HCT116 (cell line): ENCODE measurements at regions of chr1 and their contacts with region 1.

Region 1: GRCh38 chr1:219837274-219837993 is 90.9 kb downstream of the SLC30A10 start:
- DNase-seq: peak; percentile 60
- ATAC-seq: peak; percentile 88
- H3K4me3 ChIP-seq: no peak overlapping the region
- H3K27ac ChIP-seq: no peak overlapping the region
- H3K4me1 ChIP-seq: no peaks in the 10 kb centered on the region
- H3K27me3 ChIP-seq: peaks cover 7% of the 10 kb centered on the region; the same call in 1 of the 2 replicates
- CTCF ChIP-seq: peak; percentile 60 to 80 (median 63)
- POLR2A ChIP-seq: no peak
- RAD21 ChIP-seq: peak; percentile 89

Region 2: GRCh38 chr1:219862366-219862765 is 24.9 kb after region 1 on chr1:
- CTCF ChIA-PET with region 1: no interaction called
- POLR2A ChIA-PET with region 1: no interaction called
- RAD21 ChIA-PET with region 1: no interaction called
- intact Hi-C with region 1: no loop called
- DNase-seq: no peak
- ATAC-seq: no peak
- H3K4me3 ChIP-seq: no peak overlapping the region
- H3K27ac ChIP-seq: no peak overlapping the region
- H3K4me1 ChIP-seq: no peaks in the 10 kb centered on the region
- H3K27me3 ChIP-seq: no peaks in the 10 kb centered on the region; the same call in 1 of the 2 replicates
- CTCF ChIP-seq: no peak
- POLR2A ChIP-seq: no peak
- RAD21 ChIP-seq: no peak

Region 3: DNA sequence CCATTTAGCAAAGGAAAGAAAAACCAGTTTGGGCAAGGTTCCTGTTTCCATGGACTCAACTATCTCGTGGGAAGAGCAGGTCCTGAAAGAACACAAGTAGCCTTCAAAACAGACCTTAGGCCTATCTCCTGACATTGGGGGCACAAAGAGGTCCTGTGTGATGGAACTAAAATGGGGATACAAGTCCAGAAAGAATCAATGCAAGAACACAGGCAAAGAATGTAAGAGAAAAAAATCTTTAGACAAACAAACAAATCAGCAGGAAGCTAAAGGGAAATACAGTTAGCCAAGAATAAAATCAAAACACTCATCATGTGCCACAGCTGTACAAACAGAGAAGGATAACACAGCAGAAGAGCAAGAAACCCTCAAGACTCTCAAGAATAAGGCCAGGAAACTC is 62.8 kb after region 1 on chr1:
- CTCF ChIA-PET with region 1: no interaction called
- POLR2A ChIA-PET with region 1: no interaction called
- RAD21 ChIA-PET with region 1: no interaction called
- intact Hi-C with region 1: no loop called
- DNase-seq: no peak
- ATAC-seq: no peak
- H3K4me3 ChIP-seq: no peak overlapping the region
- H3K27ac ChIP-seq: no peak overlapping the region
- H3K4me1 ChIP-seq: no peaks in the 10 kb centered on the region
- H3K27me3 ChIP-seq: peaks cover 14% of the 10 kb centered on the region
- CTCF ChIP-seq: no peak
- POLR2A ChIP-seq: no peak
- RAD21 ChIP-seq: no peak

Region 4: GRCh38 chr1:220786337-220787068 is 949.1 kb after region 1 on chr1 and contains the start of gene MTARC1:
- CTCF ChIA-PET with region 1: no interaction called
- POLR2A ChIA-PET with region 1: no interaction called
- RAD21 ChIA-PET with region 1: no interaction called
- intact Hi-C with region 1: loop called (anchors 5 kb)
- DNase-seq: no peak
- ATAC-seq: peak; percentile 85
- H3K4me3 ChIP-seq: peak within 1 kb of the TSS; percentile 49 to 66
- H3K27ac ChIP-seq: peak within 1 kb of the TSS; percentile 80
- H3K4me1 ChIP-seq: peaks cover 11 to 25% of the 10 kb centered on the region in 2 experiments
- H3K27me3 ChIP-seq: no peaks in the 10 kb centered on the region
- CTCF ChIP-seq: no peak
- POLR2A ChIP-seq: peak; percentile 31
- RAD21 ChIP-seq: no peak
- total RNA-seq, gene MTARC1: 26.5 TPM